ENCODE measurements at regions of chr1 and their contacts with region 1.

Region 1: GRCh38 chr1:211382714-211383480 is 56.3 kb downstream of the TRAF5 start:
- DNase-seq: peak; percentile 79
- H3K4me3 Mint-ChIP-seq: peak overlapping the region; percentile 85
- H3K27ac Mint-ChIP-seq: peak overlapping the region; percentile 96
- H3K4me1 Mint-ChIP-seq: peaks cover 52% of the 10 kb centered on the region
- H3K27me3 Mint-ChIP-seq: no peaks in the 10 kb centered on the region

Region 2: DNA sequence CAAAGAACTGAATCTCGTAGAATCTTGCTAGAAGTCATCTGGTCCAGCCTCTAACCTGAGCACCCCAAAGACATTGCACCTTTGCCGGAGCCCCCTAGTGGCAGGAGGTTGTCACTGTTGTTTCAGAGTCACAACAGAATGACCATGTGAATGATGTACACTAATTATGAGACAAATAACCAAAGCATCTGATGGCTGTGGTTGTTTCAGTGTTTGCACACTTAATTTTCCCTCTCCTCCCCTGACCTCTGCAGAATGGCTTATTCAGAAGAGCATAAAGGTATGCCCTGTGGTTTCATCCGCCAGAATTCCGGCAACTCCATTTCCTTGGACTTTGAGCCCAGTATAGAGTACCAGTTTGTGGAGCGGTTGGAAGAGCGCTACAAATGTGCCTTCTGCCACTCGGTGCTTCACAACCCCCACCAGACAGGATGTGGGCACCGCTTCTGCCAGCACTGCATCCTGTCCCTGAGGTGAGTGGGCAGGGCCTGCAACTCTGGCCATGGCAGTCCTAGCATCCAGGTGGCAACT is 29.8 kb before region 1 on chr1:
- intact Hi-C with region 1: loop called (anchors 2 kb)
- DNase-seq: no peak
- H3K4me3 Mint-ChIP-seq: peak overlapping the region; percentile 55
- H3K27ac Mint-ChIP-seq: peak overlapping the region; percentile 62
- H3K4me1 Mint-ChIP-seq: peaks cover 55% of the 10 kb centered on the region
- H3K27me3 Mint-ChIP-seq: no peaks in the 10 kb centered on the region

Region 3: DNA sequence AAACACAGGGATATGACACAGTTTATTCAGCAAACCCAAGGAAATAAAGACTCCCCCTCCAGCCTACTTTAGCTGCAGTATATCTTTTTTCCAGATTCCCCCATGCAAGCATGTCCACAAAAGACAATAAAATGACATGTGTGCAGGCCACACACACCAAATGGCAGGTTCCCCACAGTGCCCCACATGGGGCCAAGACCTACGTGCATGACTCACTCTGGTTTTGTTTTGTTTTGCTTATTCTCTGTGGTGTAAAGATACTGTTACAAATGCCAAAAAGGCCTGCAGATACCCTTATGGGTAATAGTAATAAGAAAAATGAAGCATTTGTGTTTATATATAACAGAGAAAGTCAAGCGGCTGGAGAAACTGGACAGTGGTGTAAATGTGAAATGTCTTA is 37.5 kb after region 1 on chr1:
- intact Hi-C with region 1: loop called (anchors 2 kb)
- DNase-seq: no peak
- H3K4me3 Mint-ChIP-seq: no peak overlapping the region
- H3K27ac Mint-ChIP-seq: peak overlapping the region; percentile 36
- H3K4me1 Mint-ChIP-seq: peaks cover 31% of the 10 kb centered on the region
- H3K27me3 Mint-ChIP-seq: no peaks in the 10 kb centered on the region

Region 4: DNA sequence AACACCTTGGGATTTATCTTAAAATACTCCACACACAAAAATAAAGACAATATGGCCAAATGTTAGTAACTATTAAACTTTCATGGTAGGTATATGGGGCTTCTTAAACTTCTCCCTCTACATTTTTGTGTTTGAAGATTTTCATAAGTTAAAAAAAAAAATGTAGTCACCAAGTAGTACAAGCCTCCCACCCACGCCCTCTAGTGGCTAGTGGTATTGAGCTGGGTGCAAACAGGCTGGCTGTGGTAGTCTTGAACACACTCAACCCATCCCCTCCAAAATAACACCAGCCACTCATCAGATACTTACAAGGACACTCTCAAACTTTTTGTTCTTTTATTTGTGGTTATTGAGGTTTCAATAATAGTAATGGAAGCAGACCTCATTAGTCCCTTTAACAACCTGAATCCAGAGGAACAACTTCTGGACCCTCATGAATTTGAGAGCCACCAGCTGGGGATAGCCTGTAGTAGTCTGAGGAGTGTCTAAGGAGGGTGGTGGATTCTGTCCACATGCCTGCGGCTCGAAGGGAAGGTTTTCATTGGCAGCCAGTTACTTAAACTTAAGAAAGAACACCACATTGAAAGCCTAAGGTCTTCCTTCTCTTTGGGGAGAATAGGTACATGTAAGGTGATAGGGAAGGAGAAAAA is 93.4 kb after region 1 on chr1:
- intact Hi-C with region 1: loop called (anchors 5 kb)
- DNase-seq: peak; percentile 57
- H3K4me3 Mint-ChIP-seq: no peak overlapping the region
- H3K27ac Mint-ChIP-seq: no peak overlapping the region
- H3K4me1 Mint-ChIP-seq: peaks cover 15% of the 10 kb centered on the region
- H3K27me3 Mint-ChIP-seq: peaks cover 36% of the 10 kb centered on the region